ENCODE measurements at regions of chr10 and their contacts with region 1.

Region 1: GRCh38 chr10:33115738-33116719 is 158.0 kb upstream of the ITGB1 start:
- DNase-seq: peak in 1 of 2 experiments; percentile 68
- H3K4me3 ChIP-seq: no peak overlapping the region
- H3K27ac ChIP-seq: no peak overlapping the region
- H3K4me1 ChIP-seq: no peaks in the 10 kb centered on the region
- H3K27me3 ChIP-seq: no peaks in the 10 kb centered on the region
- CTCF ChIP-seq: peak; percentile 34 to 81 (median 54)
- EP300 ChIP-seq: no peak
- POLR2A ChIP-seq: no peak
- RAD21 ChIP-seq: peak; percentile 73 to 78

Region 2: GRCh38 chr10:32905466-32905865 is 210.6 kb before region 1 on chr10:
- CTCF ChIA-PET with region 1: no interaction called
- POLR2A ChIA-PET with region 1: no interaction called
- DNase-seq: no peak
- H3K4me3 ChIP-seq: no peak overlapping the region
- H3K27ac ChIP-seq: no peak overlapping the region
- H3K4me1 ChIP-seq: no peaks in the 10 kb centered on the region
- H3K27me3 ChIP-seq: no peaks in the 10 kb centered on the region
- CTCF ChIP-seq: no peak
- EP300 ChIP-seq: no peak
- POLR2A ChIP-seq: no peak
- RAD21 ChIP-seq: no peak

Region 3: DNA sequence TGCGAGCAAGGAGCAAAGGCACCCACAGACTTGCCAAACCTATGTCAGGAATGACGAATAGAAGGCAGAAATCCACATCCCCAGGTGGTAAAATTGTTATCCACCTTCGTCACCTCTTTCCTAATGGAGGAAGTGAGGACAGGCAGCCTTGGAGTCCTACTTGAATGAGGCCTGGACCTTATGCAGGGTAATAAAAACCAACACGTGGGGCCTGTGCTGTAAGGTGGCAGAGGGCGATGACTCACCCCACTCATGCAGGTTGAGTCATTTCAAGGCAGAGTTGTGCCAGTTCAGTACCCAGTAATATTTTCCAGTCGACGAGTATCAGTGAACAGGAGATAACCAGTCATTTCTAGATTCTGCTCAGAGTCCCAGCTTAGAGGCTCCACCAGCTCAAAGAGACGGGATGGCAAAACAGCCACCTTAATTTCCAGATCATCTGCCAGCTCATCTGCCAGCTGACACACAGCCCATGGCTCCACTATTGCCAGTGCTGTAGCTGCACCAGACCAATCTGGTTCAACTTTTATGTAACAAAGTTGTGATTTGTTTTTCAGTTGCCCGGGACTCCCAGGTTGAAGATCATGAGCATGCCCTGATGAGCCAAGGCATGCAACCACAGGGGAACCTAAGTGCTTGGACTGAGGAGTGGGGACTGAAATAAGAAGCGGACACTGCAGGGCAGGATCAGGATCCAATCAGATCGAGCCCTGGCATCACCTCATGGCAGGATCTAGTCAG is 18.2 kb after region 1 on chr10:
- CTCF ChIA-PET with region 1: interaction called, 11 read pairs
- POLR2A ChIA-PET with region 1: no interaction called
- DNase-seq: no peak
- H3K4me3 ChIP-seq: no peak overlapping the region
- H3K27ac ChIP-seq: no peak overlapping the region
- H3K4me1 ChIP-seq: no peaks in the 10 kb centered on the region; a peak in 1 of 7 replicates
- H3K27me3 ChIP-seq: no peaks in the 10 kb centered on the region
- CTCF ChIP-seq: no peak
- EP300 ChIP-seq: no peak
- POLR2A ChIP-seq: no peak
- RAD21 ChIP-seq: no peak